ENCODE measurements at regions of chr5 and their contacts with region 1.

Region 1: GRCh38 chr5:50751064-50751657 is 84.7 kb downstream of the PARP8 start:
- DNase-seq: peak; percentile 50
- H3K4me3 ChIP-seq: no peak overlapping the region
- H3K27ac ChIP-seq: no peak overlapping the region
- H3K4me1 ChIP-seq: no peaks in the 10 kb centered on the region
- H3K27me3 ChIP-seq: no peaks in the 10 kb centered on the region
- CTCF ChIP-seq: peak; percentile 76 to 87

Region 2: GRCh38 chr5:50325237-50325832 is 425.8 kb before region 1 on chr5:
- CTCF ChIA-PET with region 1: no interaction called
- dilution Hi-C with region 1: no loop called
- in situ Hi-C with region 1: no loop called
- intact Hi-C with region 1: loop called (anchors 10 kb)
- DNase-seq: no peak
- H3K4me3 ChIP-seq: no peak overlapping the region
- H3K27ac ChIP-seq: no peak overlapping the region
- H3K4me1 ChIP-seq: no peaks in the 10 kb centered on the region
- H3K27me3 ChIP-seq: no peaks in the 10 kb centered on the region
- CTCF ChIP-seq: peak; percentile 54 to 65

Region 3: DNA sequence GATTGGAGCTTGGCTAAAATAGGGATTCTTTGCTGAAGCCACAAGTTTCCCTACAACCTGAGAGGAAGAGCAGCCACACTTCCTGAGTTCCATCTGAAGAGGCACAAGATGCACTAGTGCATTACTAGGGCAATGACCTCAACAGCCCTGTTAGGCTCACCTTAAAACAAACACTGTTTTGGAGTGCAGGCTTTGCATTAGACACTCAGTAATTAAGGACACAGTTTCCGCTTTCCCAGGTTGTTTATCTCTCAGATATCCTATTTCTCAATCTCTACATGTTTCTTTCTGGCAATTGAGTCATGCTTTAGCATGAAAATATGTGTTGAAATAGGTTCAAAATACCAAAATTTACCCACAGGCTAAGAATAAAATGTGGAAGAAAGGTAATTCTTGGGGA is 344.3 kb before region 1 on chr5:
- CTCF ChIA-PET with region 1: no interaction called
- dilution Hi-C with region 1: no loop called
- in situ Hi-C with region 1: no loop called
- intact Hi-C with region 1: loop called (anchors 10 kb)
- DNase-seq: peak; percentile 52
- H3K4me3 ChIP-seq: no peak overlapping the region
- H3K27ac ChIP-seq: no peak overlapping the region
- H3K4me1 ChIP-seq: peaks cover 6% of the 10 kb centered on the region
- H3K27me3 ChIP-seq: no peaks in the 10 kb centered on the region
- CTCF ChIP-seq: no peak

Region 4: DNA sequence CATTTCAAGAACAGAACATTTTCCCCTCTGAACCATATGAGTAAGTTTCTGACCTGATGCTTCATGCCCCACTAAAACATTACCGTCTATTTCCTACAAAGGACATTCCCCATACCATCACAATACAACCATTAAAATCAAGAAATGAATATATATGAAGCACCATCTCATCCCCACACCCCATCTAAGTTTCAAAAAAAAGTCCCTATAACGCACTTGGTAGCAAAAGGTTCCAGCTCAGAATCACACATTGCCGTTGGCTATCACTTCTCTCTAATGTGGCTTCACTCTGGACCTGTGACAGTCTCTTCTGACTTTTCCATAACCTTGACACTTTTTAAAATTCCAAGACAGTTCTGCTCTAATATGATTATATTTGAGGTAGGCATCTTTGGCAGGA is 316.0 kb before region 1 on chr5:
- CTCF ChIA-PET with region 1: no interaction called
- dilution Hi-C with region 1: no loop called
- in situ Hi-C with region 1: no loop called
- intact Hi-C with region 1: loop called (anchors 10 kb)
- DNase-seq: no peak
- H3K4me3 ChIP-seq: no peak overlapping the region
- H3K27ac ChIP-seq: no peak overlapping the region
- H3K4me1 ChIP-seq: peaks cover 14% of the 10 kb centered on the region
- H3K27me3 ChIP-seq: no peaks in the 10 kb centered on the region
- CTCF ChIP-seq: no peak

Region 5: GRCh38 chr5:50580506-50580905 is 170.7 kb before region 1 on chr5:
- CTCF ChIA-PET with region 1: no interaction called
- dilution Hi-C with region 1: no loop called
- in situ Hi-C with region 1: no loop called
- intact Hi-C with region 1: loop called (anchors 10 kb)
- DNase-seq: peak; percentile 26
- H3K4me3 ChIP-seq: no peak overlapping the region
- H3K27ac ChIP-seq: no peak overlapping the region
- H3K4me1 ChIP-seq: peaks cover 6% of the 10 kb centered on the region
- H3K27me3 ChIP-seq: no peaks in the 10 kb centered on the region
- CTCF ChIP-seq: no peak

Region 6: GRCh38 chr5:50667653-50668595 is 83.2 kb before region 1 on chr5:
- CTCF ChIA-PET with region 1: no interaction called
- dilution Hi-C with region 1: no loop called
- in situ Hi-C with region 1: no loop called
- intact Hi-C with region 1: loop called (anchors 1 kb)
- DNase-seq: peak; percentile 76
- H3K4me3 ChIP-seq: peak overlapping the region; percentile 95 to 98 (median 97)
- H3K27ac ChIP-seq: peak overlapping the region; percentile 98
- H3K4me1 ChIP-seq: peaks cover 5% of the 10 kb centered on the region
- H3K27me3 ChIP-seq: no peaks in the 10 kb centered on the region
- CTCF ChIP-seq: peak in 1 of 2 donors; percentile 13

Region 7: GRCh38 chr5:50823568-50823967 is 72.4 kb after region 1 on chr5:
- CTCF ChIA-PET with region 1: no interaction called
- dilution Hi-C with region 1: no loop called
- in situ Hi-C with region 1: no loop called
- intact Hi-C with region 1: no loop called
- DNase-seq: no peak
- H3K4me3 ChIP-seq: no peak overlapping the region
- H3K27ac ChIP-seq: no peak overlapping the region
- H3K4me1 ChIP-seq: no peaks in the 10 kb centered on the region
- H3K27me3 ChIP-seq: no peaks in the 10 kb centered on the region
- CTCF ChIP-seq: no peak

Measured in mammary epithelial cell (primary cell).